ENCODE measurements at regions of chr15 and their contacts with region 1.

Region 1: DNA sequence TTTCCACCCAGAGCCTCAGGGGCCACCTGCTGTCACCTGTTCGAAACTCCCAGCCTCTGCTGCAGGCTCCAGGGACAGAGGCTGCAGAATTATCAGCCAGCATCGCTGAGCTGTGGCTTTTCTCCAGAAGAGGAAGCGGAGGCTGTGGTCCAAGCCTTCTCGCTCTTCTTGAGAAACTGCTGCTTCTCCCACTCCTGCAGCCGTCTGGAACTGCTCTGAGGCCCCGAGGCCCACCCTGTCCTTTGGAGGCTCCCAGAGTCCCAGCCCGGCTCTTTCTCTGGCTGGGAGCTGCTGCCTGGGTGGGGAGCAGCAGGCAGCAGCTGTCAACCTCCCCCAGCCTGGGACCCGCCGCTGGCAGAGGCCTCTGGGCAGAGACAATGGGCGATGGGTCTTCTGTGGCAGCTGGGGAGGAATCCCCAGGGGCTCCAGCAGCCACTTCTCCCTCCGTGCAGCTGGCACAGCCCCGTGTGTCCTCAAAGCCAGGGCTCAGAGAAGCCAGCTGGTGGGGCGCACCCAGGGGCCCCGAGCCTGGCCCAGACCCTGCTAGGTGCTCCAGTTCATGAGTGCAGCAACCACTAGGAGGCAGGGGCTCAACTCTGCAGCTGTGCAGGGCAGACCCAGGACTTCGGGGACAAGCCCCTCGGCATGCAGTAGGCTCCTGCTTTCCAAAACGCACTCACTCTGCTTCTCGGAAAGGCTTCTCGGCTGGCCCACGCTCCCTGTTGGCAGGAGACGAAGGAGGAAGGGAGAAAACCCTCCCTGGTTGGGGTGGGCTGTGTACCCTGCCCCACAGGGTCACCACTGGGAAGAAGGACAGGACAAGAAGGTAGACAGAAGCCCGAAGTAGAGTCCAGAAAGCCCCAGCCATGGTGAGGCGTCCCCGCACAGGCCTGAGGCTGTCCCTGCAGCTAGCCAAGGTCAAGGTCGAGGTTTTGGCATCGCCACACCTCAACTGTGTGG is 49.9 kb upstream of the FURIN start:
- DNase-seq: peak; percentile 37
- H3K4me3 Mint-ChIP-seq: peak overlapping the region; percentile 74
- H3K27ac Mint-ChIP-seq: peak overlapping the region; percentile 97
- H3K4me1 Mint-ChIP-seq: peaks cover 65% of the 10 kb centered on the region
- H3K27me3 Mint-ChIP-seq: no peaks in the 10 kb centered on the region

Region 2: DNA sequence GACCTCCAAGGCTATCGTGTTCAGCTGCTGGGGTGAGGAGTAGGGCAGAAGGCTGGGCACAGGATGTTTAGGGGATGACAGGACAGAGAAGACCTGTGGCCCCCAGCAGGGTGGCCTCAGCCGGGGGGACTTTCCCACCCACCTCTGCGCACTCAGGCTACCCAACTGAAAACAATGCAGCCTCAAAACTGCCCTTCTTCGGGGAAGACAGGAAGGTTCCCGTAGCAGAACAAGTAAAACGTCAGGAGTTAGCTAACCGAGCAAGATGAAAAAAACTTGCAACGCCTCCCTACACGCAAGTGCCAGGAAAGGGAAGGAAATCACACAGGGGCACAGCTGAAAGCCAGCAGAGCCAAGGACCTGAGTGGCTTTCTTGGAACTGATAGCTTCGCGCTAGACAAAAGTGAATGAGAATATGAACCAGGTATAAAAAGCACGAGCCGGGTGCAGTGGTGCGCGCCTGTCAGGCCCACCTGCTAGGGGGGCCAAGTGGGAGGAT is 11.5 kb after region 1 on chr15:
- intact Hi-C with region 1: loop called (anchors 1 kb)
- DNase-seq: peak; percentile 57
- H3K4me3 Mint-ChIP-seq: peak overlapping the region; percentile 31
- H3K27ac Mint-ChIP-seq: peak overlapping the region; percentile 96
- H3K4me1 Mint-ChIP-seq: peaks cover 39% of the 10 kb centered on the region
- H3K27me3 Mint-ChIP-seq: no peaks in the 10 kb centered on the region

Region 3: DNA sequence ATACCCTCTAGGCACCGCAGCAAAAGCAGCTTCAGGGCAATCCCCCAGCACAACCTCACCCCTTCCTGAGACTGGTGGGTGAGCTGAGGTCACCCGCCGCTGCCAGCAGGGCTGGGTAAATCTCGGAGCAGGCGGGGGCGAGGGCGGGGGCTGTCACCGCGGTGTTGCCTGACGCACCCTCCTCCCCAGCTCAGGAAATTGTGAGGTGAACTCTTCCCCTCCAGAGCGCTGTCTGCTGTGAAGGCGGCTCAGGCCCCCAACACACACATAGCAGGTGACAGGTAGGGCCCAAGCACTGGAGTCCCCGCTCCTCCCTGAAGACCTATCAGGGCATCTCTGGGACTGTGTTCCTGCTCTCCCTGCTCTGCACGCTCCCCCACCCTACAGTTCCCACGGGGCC is 19.6 kb after region 1 on chr15:
- intact Hi-C with region 1: loop called (anchors 1 kb)
- DNase-seq: peak; percentile 79
- H3K4me3 Mint-ChIP-seq: peak overlapping the region; percentile 70
- H3K27ac Mint-ChIP-seq: peak overlapping the region; percentile 96
- H3K4me1 Mint-ChIP-seq: peaks cover 54% of the 10 kb centered on the region
- H3K27me3 Mint-ChIP-seq: no peaks in the 10 kb centered on the region

Region 4: GRCh38 chr15:90851114-90851513 is 32.6 kb after region 1 on chr15:
- intact Hi-C with region 1: loop called (anchors 1 kb)
- DNase-seq: no peak
- H3K4me3 Mint-ChIP-seq: peak overlapping the region; percentile 60
- H3K27ac Mint-ChIP-seq: peak overlapping the region; percentile 94
- H3K4me1 Mint-ChIP-seq: peaks cover 53% of the 10 kb centered on the region
- H3K27me3 Mint-ChIP-seq: no peaks in the 10 kb centered on the region

Region 5: GRCh38 chr15:90860942-90861675 is 42.6 kb after region 1 on chr15:
- intact Hi-C with region 1: loop called (anchors 1 kb)
- DNase-seq: no peak
- H3K4me3 Mint-ChIP-seq: no peak overlapping the region
- H3K27ac Mint-ChIP-seq: no peak overlapping the region
- H3K4me1 Mint-ChIP-seq: peaks cover 55% of the 10 kb centered on the region
- H3K27me3 Mint-ChIP-seq: no peaks in the 10 kb centered on the region

Region 6: GRCh38 chr15:90869601-90870353 is 51.2 kb after region 1 on chr15:
- intact Hi-C with region 1: loop called (anchors 1 kb)
- DNase-seq: peak; percentile 31
- H3K4me3 Mint-ChIP-seq: peak overlapping the region; percentile 96
- H3K27ac Mint-ChIP-seq: peak overlapping the region; percentile 91
- H3K4me1 Mint-ChIP-seq: peaks cover 51% of the 10 kb centered on the region
- H3K27me3 Mint-ChIP-seq: no peaks in the 10 kb centered on the region

Region 7: GRCh38 chr15:90886041-90886614 is 67.6 kb after region 1 on chr15:
- intact Hi-C with region 1: loop called (anchors 5 kb)
- DNase-seq: peak; percentile 72
- H3K4me3 Mint-ChIP-seq: no peak overlapping the region
- H3K27ac Mint-ChIP-seq: peak overlapping the region; percentile 66
- H3K4me1 Mint-ChIP-seq: peaks cover 30% of the 10 kb centered on the region
- H3K27me3 Mint-ChIP-seq: no peaks in the 10 kb centered on the region